ENCODE measurements at regions of chr16 and their contacts with region 1.

Region 1: DNA sequence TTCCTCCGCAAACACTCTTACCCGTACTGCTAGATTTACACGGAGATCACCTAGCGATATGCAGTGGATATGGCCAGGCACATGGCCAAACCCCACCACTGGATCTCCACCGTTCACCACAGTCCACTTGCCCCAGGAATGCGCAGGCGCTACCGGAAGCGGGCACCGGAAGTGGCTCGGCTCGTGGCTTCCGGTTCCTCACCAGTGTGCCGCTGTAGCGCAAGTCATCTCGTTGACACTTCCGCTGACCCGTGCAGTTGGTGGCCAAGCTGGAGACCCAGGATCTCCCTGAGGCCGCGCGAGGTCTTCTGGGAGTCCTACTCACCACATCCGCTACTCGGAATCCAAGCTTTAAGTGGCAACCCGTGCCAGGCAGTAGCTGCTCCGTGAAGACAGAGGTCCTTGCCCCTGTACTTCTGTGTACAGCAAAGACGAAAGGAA is 11.5 kb downstream of the ZNF597 start:
- DNase-seq: peak; percentile 89

Region 2: DNA sequence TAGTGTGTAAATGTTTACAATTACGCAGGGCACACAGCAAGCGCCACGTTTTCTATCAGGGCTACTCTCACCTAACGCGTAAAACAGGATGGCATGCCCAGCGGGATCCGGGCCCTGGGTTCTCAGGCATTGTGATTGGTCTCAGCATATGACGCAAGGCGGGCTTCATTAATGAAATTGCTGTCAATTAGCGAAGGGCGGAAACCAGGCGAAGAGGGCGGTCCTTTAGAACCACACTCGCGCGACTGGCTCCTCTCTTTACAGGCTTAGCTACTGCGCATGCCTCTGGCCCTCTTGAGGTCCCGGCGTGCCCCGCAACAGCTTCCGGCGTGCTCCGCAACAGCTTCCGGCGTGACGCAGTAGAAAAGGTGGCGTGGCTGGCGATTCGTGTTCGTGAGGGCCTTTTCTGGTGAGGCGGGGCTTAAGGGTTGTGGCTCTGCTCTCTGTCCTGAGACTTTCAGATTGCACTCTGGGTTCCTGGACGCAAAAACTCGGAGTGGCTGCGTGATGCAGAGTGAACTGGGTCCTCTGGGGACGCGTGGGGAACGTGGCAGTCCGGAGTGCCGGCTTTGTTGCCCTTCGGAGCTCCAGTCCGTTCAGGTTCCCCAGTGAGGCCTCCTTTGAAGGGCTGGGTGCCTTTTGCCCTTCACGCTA is 66.9 kb before region 1 on chr16:
- intact Hi-C with region 1: loop called in 1 of 2 experiments (anchors 10 kb)
- DNase-seq: peak; percentile 95

Region 3: GRCh38 chr16:4032768-4033167 is 601.0 kb after region 1 on chr16:
- intact Hi-C with region 1: no loop called
- DNase-seq: peak; percentile 86